Caco-2 (cell line): ENCODE measurements at regions of chr6 and their contacts with region 1.

Region 1: GRCh38 chr6:13795041-13795750 is 19.2 kb downstream of the MCUR1 start:
- DNase-seq: peak; percentile 74 to 84
- H3K4me3 ChIP-seq: no peak overlapping the region
- H3K4me3 Mint-ChIP-seq: no peak overlapping the region
- H3K27ac Mint-ChIP-seq: peak overlapping the region; percentile 37
- H3K4me1 ChIP-seq: peaks cover 13% of the 10 kb centered on the region; the same call in 1 of the 2 replicates
- H3K4me1 Mint-ChIP-seq: peaks cover 11% of the 10 kb centered on the region
- H3K27me3 ChIP-seq: no peaks in the 10 kb centered on the region
- H3K27me3 Mint-ChIP-seq: no peaks in the 10 kb centered on the region
- CTCF ChIP-seq: peak; percentile 84 to 90

Region 2: DNA sequence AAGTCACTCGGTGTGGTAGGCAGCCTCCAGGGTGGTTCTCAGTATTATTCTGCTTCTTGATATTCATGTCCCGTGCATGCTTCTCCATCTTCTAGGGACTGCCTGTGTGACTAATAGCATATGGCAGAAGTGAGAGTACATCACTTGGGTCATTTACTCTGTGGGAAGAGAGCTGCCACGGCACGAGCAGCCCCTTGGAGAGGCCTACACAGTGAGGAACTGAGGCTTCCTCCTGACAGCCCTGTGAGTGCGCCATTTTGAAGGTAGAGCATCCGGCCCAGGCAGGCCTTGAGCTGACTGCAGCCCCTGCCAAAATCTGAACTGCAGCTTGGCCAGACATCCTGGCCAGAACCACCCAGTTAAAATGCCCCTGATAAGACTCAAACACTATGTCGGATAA is 36.4 kb after region 1 on chr6:
- CTCF ChIA-PET with region 1: no interaction called
- POLR2A ChIA-PET with region 1: no interaction called
- intact Hi-C with region 1: no loop called
- DNase-seq: no peak
- H3K4me3 ChIP-seq: no peak overlapping the region
- H3K4me3 Mint-ChIP-seq: no peak overlapping the region
- H3K27ac Mint-ChIP-seq: no peak overlapping the region
- H3K4me1 ChIP-seq: peaks cover 36% of the 10 kb centered on the region
- H3K4me1 Mint-ChIP-seq: peaks cover 26% of the 10 kb centered on the region
- H3K27me3 ChIP-seq: no peaks in the 10 kb centered on the region
- H3K27me3 Mint-ChIP-seq: no peaks in the 10 kb centered on the region
- CTCF ChIP-seq: no peak

Region 3: DNA sequence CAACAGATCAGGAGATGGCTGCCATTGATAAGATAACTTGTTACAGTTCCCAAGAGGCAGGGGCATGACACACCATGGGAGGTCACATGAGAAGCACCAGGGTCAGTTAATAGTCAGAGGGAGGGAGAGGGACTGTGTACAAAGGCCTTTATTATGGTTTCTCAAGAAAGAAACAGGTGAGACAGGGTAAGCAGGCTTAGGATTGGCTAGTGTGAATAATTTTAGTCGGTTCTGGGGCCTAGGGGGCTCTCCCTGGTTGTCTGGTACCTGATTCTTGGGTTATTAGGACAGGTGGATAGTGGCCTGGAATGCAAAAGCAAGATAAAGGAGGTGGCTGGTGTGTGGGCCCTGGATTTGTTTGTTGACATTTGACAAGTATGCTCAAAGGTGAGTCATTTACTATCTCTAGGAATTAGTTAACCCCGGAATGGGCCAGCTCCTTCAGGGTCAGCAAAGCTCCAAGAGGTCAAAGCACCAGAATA is 68.5 kb after region 1 on chr6:
- CTCF ChIA-PET with region 1: no interaction called
- POLR2A ChIA-PET with region 1: no interaction called
- intact Hi-C with region 1: loop called (anchors 2 kb)
- DNase-seq: peak; percentile 95 to 96
- H3K4me3 ChIP-seq: no peak overlapping the region
- H3K4me3 Mint-ChIP-seq: peak overlapping the region; percentile 8
- H3K27ac Mint-ChIP-seq: peak overlapping the region; percentile 29
- H3K4me1 ChIP-seq: peaks cover 30% of the 10 kb centered on the region
- H3K4me1 Mint-ChIP-seq: peaks cover 16% of the 10 kb centered on the region
- H3K27me3 ChIP-seq: no peaks in the 10 kb centered on the region
- H3K27me3 Mint-ChIP-seq: no peaks in the 10 kb centered on the region
- CTCF ChIP-seq: no peak

Region 4: DNA sequence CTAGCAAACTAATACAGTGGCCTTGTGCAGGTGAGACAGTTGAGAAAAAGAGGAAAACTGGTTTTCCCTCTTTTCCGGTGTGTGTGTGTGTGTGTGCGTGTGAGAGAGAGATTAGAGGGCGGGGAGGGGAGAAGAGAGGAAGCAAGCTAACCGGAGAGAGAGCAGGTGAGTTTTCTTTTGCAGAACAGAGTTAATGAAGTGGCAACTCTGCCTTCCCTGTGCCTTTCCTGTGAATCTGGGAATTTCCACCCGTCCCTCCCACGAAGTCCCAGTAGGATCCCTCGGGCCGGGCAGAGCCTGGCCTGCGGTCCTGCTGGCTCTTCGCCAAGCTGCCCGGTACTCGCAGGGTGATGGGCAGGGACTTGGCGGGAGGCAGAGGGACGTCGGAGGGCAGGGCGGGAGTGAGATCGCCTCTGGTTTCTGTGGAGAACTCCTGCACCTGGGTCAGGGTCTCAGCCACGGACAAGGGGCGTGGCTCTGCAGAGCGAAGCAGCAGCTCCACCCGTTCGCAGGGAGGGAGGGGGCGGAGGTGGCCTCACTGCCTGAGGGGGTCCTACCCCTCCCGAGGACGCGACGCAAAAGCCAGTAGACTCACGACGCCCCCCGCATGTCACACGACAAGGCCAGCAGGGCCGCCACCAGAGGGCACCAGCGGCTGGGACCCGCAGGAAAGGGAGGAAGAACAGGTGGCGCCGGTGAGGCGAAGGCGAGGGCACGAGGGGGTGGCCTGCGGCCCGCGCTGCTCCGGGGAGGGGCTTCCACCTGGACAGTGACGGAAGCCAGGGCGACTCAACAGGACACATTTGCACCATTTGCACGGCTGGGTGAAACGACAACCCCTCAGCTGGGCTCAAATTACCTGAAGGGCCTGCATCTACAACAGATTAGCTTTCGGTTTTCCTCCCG is 78.3 kb after region 1 on chr6:
- CTCF ChIA-PET with region 1: interaction called, 6 read pairs
- POLR2A ChIA-PET with region 1: no interaction called
- intact Hi-C with region 1: loop called (anchors 1 kb)
- DNase-seq: peak; percentile 94 to 96
- H3K4me3 ChIP-seq: peak overlapping the region; percentile 53
- H3K4me3 Mint-ChIP-seq: peak overlapping the region; percentile 75
- H3K27ac Mint-ChIP-seq: peak overlapping the region; percentile 99
- H3K4me1 ChIP-seq: peaks cover 17% of the 10 kb centered on the region
- H3K4me1 Mint-ChIP-seq: peaks cover 14% of the 10 kb centered on the region
- H3K27me3 ChIP-seq: no peaks in the 10 kb centered on the region
- H3K27me3 Mint-ChIP-seq: no peaks in the 10 kb centered on the region
- CTCF ChIP-seq: peak; percentile 84 to 98

Region 5: DNA sequence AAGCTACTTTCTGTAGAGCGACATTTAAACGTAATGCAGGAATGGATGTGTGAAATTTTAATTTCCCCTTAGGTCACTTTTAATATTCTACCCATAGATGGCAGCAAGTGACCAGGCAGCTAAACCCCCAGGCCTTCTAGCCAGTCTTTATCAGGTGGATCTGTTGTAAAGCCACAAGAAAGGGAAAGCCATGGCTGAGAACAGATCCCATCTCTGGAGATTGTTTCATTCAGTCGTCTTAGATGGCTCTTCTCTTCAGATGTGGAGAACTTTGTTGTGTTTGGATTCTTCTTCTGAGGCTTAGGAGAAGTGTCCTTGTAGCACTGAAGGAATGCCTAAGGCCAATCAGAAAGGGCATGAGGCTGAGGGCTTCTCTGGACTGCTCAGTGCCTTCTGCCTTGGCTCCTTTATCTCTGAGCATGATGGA is 113.8 kb after region 1 on chr6:
- CTCF ChIA-PET with region 1: no interaction called
- POLR2A ChIA-PET with region 1: no interaction called
- intact Hi-C with region 1: loop called (anchors 1 kb)
- DNase-seq: peak; percentile 62 to 66
- H3K4me3 ChIP-seq: no peak overlapping the region
- H3K4me3 Mint-ChIP-seq: no peak overlapping the region
- H3K27ac Mint-ChIP-seq: no peak overlapping the region
- H3K4me1 ChIP-seq: peaks cover 12% of the 10 kb centered on the region
- H3K4me1 Mint-ChIP-seq: peaks cover 11% of the 10 kb centered on the region
- H3K27me3 ChIP-seq: no peaks in the 10 kb centered on the region
- H3K27me3 Mint-ChIP-seq: no peaks in the 10 kb centered on the region
- CTCF ChIP-seq: peak; percentile 74 to 75

Region 6: DNA sequence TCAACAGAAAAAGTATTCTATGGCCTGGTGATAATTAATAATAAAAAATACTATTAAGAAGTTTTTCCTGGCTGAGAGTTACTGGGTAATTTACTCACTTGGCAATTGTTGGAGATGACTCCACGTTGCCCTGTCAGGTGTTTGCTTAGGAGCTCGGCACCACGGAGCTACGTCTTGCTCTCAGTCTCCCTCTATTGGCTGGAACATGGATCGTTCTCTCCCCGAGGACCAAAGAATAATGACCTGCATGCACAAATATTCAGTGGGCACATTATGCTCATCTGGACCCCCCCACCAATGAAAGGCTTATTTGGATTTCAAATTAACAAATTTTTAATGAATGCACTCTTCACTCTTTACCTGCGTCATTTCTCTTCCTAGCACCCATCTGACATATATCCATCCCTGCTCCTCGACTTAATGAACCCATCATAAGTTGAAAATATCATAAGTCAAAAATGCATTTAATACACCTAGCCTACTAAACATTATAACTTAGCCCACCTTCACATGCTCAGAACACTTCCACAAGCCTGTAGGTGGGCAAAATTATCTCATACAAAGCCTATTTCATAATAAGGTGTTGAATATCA is 251.4 kb after region 1 on chr6:
- CTCF ChIA-PET with region 1: interaction called, 4 read pairs
- POLR2A ChIA-PET with region 1: no interaction called
- intact Hi-C with region 1: loop called (anchors 1 kb)
- DNase-seq: peak; percentile 41 to 60
- H3K4me3 ChIP-seq: no peak overlapping the region
- H3K4me3 Mint-ChIP-seq: no peak overlapping the region
- H3K27ac Mint-ChIP-seq: no peak overlapping the region
- H3K4me1 ChIP-seq: no peaks in the 10 kb centered on the region
- H3K4me1 Mint-ChIP-seq: no peaks in the 10 kb centered on the region
- H3K27me3 ChIP-seq: no peaks in the 10 kb centered on the region; the same call in 1 of the 2 replicates
- H3K27me3 Mint-ChIP-seq: peaks cover 17% of the 10 kb centered on the region
- CTCF ChIP-seq: peak; percentile 68 to 75

Region 7: DNA sequence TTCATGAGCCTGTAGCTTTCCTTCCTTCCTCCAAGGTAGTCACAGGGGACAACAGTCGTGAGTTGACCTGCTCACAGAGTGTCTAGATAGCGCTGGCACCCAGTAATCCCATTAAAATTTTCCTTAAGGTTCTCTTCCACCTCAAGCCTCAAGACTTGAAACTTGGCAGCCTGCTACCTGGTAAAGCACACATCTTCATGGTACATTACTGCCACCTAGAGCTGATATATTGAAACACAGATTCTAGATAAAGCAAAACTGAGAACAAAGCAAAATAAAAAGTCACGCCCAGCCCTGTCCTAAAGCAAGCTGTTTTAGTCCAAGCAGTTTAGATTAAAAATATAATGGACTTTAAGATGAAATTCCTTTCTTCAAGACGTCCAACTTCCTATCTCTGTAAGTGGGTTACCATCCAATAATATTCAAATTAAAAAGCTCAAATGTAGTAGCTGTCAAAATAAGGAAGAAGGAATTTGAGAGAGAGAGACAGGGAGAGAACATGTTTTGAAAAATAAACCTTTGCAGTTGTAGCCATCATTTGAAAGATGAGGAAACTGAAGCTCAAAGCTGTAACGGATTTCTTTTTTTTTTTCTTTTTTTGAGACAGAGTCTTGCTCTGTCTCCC is 271.7 kb after region 1 on chr6:
- CTCF ChIA-PET with region 1: no interaction called
- POLR2A ChIA-PET with region 1: no interaction called
- intact Hi-C with region 1: loop called (anchors 1 kb)
- DNase-seq: peak in 1 of 2 experiments; percentile 51
- H3K4me3 ChIP-seq: no peak overlapping the region
- H3K4me3 Mint-ChIP-seq: no peak overlapping the region
- H3K27ac Mint-ChIP-seq: no peak overlapping the region
- H3K4me1 ChIP-seq: no peaks in the 10 kb centered on the region
- H3K4me1 Mint-ChIP-seq: peaks cover 7% of the 10 kb centered on the region
- H3K27me3 ChIP-seq: no peaks in the 10 kb centered on the region
- H3K27me3 Mint-ChIP-seq: peaks cover 3% of the 10 kb centered on the region
- CTCF ChIP-seq: peak; percentile 57 to 60

Region 8: GRCh38 chr6:14144678-14145113 is 349.5 kb after region 1 on chr6:
- CTCF ChIA-PET with region 1: no interaction called
- POLR2A ChIA-PET with region 1: no interaction called
- intact Hi-C with region 1: loop called (anchors 2 kb)
- DNase-seq: peak; percentile 73 to 82
- H3K4me3 ChIP-seq: no peak overlapping the region
- H3K4me3 Mint-ChIP-seq: no peak overlapping the region
- H3K27ac Mint-ChIP-seq: no peak overlapping the region
- H3K4me1 ChIP-seq: no peaks in the 10 kb centered on the region
- H3K4me1 Mint-ChIP-seq: no peaks in the 10 kb centered on the region
- H3K27me3 ChIP-seq: no peaks in the 10 kb centered on the region
- H3K27me3 Mint-ChIP-seq: peaks cover 2% of the 10 kb centered on the region
- CTCF ChIP-seq: peak; percentile 82 to 92

Region 9: GRCh38 chr6:14431385-14432330 is 636.5 kb after region 1 on chr6:
- CTCF ChIA-PET with region 1: no interaction called
- POLR2A ChIA-PET with region 1: no interaction called
- intact Hi-C with region 1: no loop called
- DNase-seq: no peak
- H3K4me3 ChIP-seq: no peak overlapping the region
- H3K4me3 Mint-ChIP-seq: no peak overlapping the region
- H3K27ac Mint-ChIP-seq: no peak overlapping the region
- H3K4me1 ChIP-seq: no peaks in the 10 kb centered on the region
- H3K4me1 Mint-ChIP-seq: no peaks in the 10 kb centered on the region
- H3K27me3 ChIP-seq: no peaks in the 10 kb centered on the region
- H3K27me3 Mint-ChIP-seq: no peaks in the 10 kb centered on the region
- CTCF ChIP-seq: no peak